ENCODE measurements at regions of chr7 and their contacts with region 1.

Region 1: GRCh38 chr7:133853706-133854276 is 273.3 kb upstream of the LRGUK start:
- DNase-seq: peak; percentile 72
- H3K4me3 ChIP-seq: peak overlapping the region in 1 of 2 experiments; percentile 7; a peak in 2 of 4 replicates
- H3K27ac ChIP-seq: peak overlapping the region; percentile 85 to 98
- H3K4me1 ChIP-seq: peaks cover 30 to 53% of the 10 kb centered on the region in 2 experiments
- H3K27me3 ChIP-seq: no peaks in the 10 kb centered on the region
- CTCF ChIP-seq: peak; percentile 94
- EP300 ChIP-seq: peak; percentile 47 to 88
- RAD21 ChIP-seq: peak; percentile 78

Region 2: DNA sequence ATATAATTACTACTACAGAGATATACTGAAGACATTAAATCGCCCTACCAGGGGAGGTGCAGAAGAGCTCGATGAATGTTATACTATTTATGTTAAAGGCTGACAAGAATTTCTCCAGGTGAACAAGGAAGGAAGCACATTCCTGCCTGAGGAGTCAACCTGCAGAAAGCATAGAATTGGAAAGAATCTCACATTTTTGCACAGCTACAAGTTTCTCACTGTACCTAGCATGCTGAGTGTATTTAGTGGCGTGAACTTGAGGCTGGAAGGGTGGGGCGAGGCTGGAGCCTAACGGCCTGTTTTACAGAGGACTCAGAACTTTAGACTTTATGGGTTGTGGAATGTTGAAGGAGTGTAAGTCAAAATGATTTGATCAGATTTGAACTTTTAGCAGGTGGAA is 100.3 kb before region 1 on chr7:
- CTCF ChIA-PET with region 1: interaction called, 17 read pairs
- POLR2A ChIA-PET with region 1: interaction called, 4 read pairs
- DNase-seq: no peak
- H3K4me3 ChIP-seq: no peak overlapping the region
- H3K27ac ChIP-seq: peak overlapping the region in 1 of 2 experiments; percentile 100; a peak in 2 of 4 replicates
- H3K4me1 ChIP-seq: peaks cover 0 to 24% of the 10 kb centered on the region in 2 experiments; a peak in 2 of 4 replicates
- H3K27me3 ChIP-seq: no peaks in the 10 kb centered on the region
- CTCF ChIP-seq: no peak
- EP300 ChIP-seq: no peak
- RAD21 ChIP-seq: no peak

Region 3: GRCh38 chr7:133778472-133778871 is 75.3 kb before region 1 on chr7:
- CTCF ChIA-PET with region 1: interaction called, 17 read pairs
- POLR2A ChIA-PET with region 1: no interaction called
- DNase-seq: no peak
- H3K4me3 ChIP-seq: no peak overlapping the region
- H3K27ac ChIP-seq: peak overlapping the region in 1 of 2 experiments; percentile 100; a peak in 2 of 4 replicates
- H3K4me1 ChIP-seq: peaks cover 0 to 58% of the 10 kb centered on the region in 2 experiments; a peak in 2 of 4 replicates
- H3K27me3 ChIP-seq: no peaks in the 10 kb centered on the region
- CTCF ChIP-seq: no peak
- EP300 ChIP-seq: no peak
- RAD21 ChIP-seq: no peak

Region 4: GRCh38 chr7:133794479-133794878 is 59.3 kb before region 1 on chr7:
- CTCF ChIA-PET with region 1: interaction called, 46 read pairs
- POLR2A ChIA-PET with region 1: interaction called, 4 read pairs
- DNase-seq: no peak
- H3K4me3 ChIP-seq: no peak overlapping the region
- H3K27ac ChIP-seq: peak overlapping the region in 1 of 2 experiments; percentile 100; a peak in 2 of 4 replicates
- H3K4me1 ChIP-seq: peaks cover 11 to 49% of the 10 kb centered on the region in 2 experiments; a peak in 3 of 4 replicates
- H3K27me3 ChIP-seq: no peaks in the 10 kb centered on the region
- CTCF ChIP-seq: no peak
- EP300 ChIP-seq: peak in 1 of 2 experiments; percentile 40; a peak in 1 of 4 replicates
- RAD21 ChIP-seq: no peak

Region 5: DNA sequence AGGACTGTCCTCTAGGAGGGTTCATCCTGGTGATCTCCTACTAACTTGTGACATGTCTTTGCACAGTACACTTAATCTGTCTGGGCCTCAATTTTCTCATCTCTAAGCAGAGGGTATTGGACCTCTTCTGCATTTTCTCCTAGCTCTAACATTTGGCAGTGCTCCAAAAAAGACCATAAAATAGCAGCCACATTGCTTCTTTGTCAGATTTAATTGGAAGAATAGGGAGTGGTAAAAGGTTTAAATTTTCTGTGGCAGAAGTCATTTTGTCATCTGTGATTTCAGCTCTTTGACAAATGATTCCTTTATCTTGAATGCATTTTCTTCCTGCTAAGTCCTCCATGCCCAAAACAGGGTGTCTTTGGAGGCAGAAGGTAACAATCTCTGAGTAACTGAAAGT is 16.6 kb before region 1 on chr7:
- CTCF ChIA-PET with region 1: interaction called, 43 read pairs
- POLR2A ChIA-PET with region 1: no interaction called
- DNase-seq: peak; percentile 57
- H3K4me3 ChIP-seq: no peak overlapping the region
- H3K27ac ChIP-seq: peak overlapping the region; percentile 12 to 100; a peak in 3 of 4 replicates
- H3K4me1 ChIP-seq: peaks cover 0 to 50% of the 10 kb centered on the region in 2 experiments; a peak in 2 of 4 replicates
- H3K27me3 ChIP-seq: no peaks in the 10 kb centered on the region
- CTCF ChIP-seq: no peak
- EP300 ChIP-seq: peak in 1 of 2 experiments; percentile 94; a peak in 2 of 4 replicates
- RAD21 ChIP-seq: peak; percentile 33; the same call in 1 of the 2 replicates

Region 6: GRCh38 chr7:133983685-133984419 is 130.1 kb after region 1 on chr7:
- CTCF ChIA-PET with region 1: interaction called, 12 read pairs
- POLR2A ChIA-PET with region 1: interaction called, 3 read pairs
- DNase-seq: peak; percentile 72
- H3K4me3 ChIP-seq: no peak overlapping the region
- H3K27ac ChIP-seq: peak overlapping the region in 1 of 2 experiments; percentile 100; a peak in 2 of 4 replicates
- H3K4me1 ChIP-seq: peaks cover 0 to 29% of the 10 kb centered on the region in 2 experiments; a peak in 2 of 4 replicates
- H3K27me3 ChIP-seq: no peaks in the 10 kb centered on the region
- CTCF ChIP-seq: no peak
- EP300 ChIP-seq: peak in 1 of 2 experiments; percentile 72; a peak in 2 of 4 replicates
- RAD21 ChIP-seq: peak; percentile 63

Region 7: DNA sequence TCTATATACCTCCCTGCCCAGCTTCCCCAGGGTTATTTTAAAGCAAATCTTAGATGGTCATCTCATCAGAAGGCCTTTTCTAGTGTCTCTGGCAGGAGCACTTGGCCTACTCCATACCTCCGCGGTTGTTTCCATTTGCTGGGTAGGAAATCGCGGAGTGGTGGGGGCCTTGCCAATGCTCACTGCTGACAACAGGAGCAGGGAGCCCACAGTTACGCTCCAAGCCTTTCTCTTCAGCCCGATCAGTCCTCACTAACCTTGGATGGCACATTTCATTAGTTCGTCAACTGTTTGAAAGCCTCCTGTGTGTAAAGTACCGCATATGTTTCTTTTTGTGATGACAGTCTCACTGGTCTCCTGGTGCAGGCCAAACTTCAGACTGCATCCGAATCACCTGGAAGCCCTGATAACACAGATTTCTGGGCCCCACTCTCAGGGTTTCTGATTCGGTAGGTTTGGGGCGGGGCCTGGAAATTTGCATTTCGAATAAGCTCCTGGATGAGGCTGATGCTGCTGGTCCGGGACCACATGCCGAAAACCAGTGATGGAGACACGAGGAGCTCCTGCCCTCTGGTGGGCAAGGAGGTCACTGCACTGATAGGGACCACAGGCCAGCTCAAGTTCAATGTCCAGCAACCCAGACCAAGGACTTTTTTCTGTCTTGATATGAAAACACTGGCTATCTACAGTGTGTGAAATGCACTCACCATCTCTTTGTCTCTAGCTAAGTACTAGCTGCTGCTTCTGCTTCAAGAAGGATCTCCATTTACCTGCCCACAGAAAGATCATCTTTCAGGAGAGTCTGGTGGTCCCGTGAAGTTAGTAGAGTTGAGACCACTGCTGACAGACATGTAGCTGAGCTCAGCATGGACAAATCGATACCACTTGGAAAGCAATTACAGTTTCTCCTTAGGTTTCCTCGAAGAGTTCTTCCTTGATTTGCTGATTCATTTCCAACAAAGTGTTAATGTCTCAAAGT is 287.4 kb after region 1 on chr7:
- CTCF ChIA-PET with region 1: interaction called, 12 read pairs
- POLR2A ChIA-PET with region 1: no interaction called
- DNase-seq: peak; percentile 86
- H3K4me3 ChIP-seq: no peak overlapping the region
- H3K27ac ChIP-seq: peak overlapping the region in 1 of 2 experiments; percentile 63; a peak in 2 of 4 replicates
- H3K4me1 ChIP-seq: peaks cover 0 to 20% of the 10 kb centered on the region in 2 experiments; a peak in 2 of 4 replicates
- H3K27me3 ChIP-seq: no peaks in the 10 kb centered on the region
- CTCF ChIP-seq: peak; percentile 98
- EP300 ChIP-seq: peak in 1 of 2 experiments; percentile 49; a peak in 1 of 4 replicates
- RAD21 ChIP-seq: peak; percentile 98